Prostate gland (tissue), 2 donors: ENCODE measurements at regions of chr15 and their contacts with region 1.

Region 1: GRCh38 chr15:88476635-88477060 is 9.1 kb downstream of the MRPS11 start:
- DNase-seq: no peak
- H3K4me3 ChIP-seq: no peak overlapping the region
- H3K27ac ChIP-seq: no peak overlapping the region
- H3K4me1 ChIP-seq: no peaks in the 10 kb centered on the region
- H3K27me3 ChIP-seq: no peaks in the 10 kb centered on the region
- CTCF ChIP-seq: peak in 3 of 4 experiments; percentile 19 to 52 (median 42)
- POLR2A ChIP-seq: no peak

Region 2: GRCh38 chr15:88513195-88513594 is 36.5 kb after region 1 on chr15:
- intact Hi-C with region 1: no loop called
- DNase-seq: no peak
- H3K4me3 ChIP-seq: no peak overlapping the region
- H3K27ac ChIP-seq: no peak overlapping the region
- H3K4me1 ChIP-seq: no peaks in the 10 kb centered on the region
- H3K27me3 ChIP-seq: no peaks in the 10 kb centered on the region
- CTCF ChIP-seq: no peak
- POLR2A ChIP-seq: no peak

Region 3: DNA sequence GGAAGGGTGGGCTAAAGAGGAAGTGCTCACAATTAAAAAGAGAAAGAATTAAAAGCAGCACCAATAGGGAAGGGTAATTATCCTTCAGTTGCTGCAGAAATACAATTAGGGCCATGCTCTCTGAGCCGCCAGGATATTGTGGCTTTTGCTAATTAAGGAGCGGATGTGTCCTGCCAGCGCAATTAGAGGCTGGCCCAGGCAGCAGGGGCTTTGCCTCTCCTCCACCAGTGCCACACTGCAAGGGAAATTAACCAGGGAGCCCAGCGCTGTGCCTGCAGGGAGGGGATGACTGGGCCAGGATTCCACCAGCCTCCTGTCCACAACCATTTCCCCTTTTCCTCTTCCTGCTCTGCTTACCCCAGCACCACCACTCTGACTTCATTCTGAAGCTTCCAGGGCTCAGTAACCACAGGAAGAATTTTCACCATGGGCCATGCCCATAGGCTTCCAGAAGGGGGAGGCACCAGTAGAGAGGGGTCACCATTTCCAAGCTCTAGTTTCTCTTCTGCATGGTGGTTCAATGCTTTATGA is 134.1 kb after region 1 on chr15:
- intact Hi-C with region 1: loop called (anchors 5 kb)
- DNase-seq: no peak
- H3K4me3 ChIP-seq: no peak overlapping the region
- H3K27ac ChIP-seq: no peak overlapping the region
- H3K4me1 ChIP-seq: no peaks in the 10 kb centered on the region
- H3K27me3 ChIP-seq: peaks cover 14% of the 10 kb centered on the region
- CTCF ChIP-seq: no peak
- POLR2A ChIP-seq: no peak

Region 4: DNA sequence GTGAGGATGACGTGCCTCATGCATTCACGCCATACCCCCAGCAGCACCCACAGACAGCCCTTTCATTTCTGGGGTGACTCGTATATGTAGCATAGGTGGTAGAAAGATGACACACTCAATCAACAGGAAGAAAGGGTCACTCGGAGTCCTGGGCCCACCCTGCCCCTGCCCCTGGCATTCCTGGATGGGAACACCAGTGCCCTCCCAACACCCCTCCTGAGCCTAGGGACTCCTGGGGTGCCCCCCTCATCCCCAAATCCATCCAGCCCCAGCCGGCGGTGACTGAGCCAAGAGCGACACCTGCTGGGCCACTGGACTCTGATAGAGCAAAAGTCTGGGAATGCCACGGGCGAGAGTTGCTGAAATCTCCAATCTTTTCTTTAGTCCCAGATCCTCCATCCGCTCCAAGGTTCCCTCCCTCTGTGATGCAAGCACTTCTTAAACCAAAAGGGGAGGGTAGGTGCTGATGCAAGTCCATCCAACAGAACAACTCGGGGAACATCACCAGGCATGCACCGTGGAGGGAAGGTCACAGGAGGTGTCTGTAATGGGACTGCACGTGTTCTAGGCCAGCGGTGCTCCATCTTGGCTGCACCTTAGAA is 357.7 kb after region 1 on chr15:
- intact Hi-C with region 1: loop called (anchors 5 kb)
- DNase-seq: no peak
- H3K4me3 ChIP-seq: no peak overlapping the region
- H3K27ac ChIP-seq: no peak overlapping the region
- H3K4me1 ChIP-seq: no peaks in the 10 kb centered on the region
- H3K27me3 ChIP-seq: no peaks in the 10 kb centered on the region
- CTCF ChIP-seq: peak in 3 of 4 experiments; percentile 15 to 48 (median 46)
- POLR2A ChIP-seq: no peak

Region 5: DNA sequence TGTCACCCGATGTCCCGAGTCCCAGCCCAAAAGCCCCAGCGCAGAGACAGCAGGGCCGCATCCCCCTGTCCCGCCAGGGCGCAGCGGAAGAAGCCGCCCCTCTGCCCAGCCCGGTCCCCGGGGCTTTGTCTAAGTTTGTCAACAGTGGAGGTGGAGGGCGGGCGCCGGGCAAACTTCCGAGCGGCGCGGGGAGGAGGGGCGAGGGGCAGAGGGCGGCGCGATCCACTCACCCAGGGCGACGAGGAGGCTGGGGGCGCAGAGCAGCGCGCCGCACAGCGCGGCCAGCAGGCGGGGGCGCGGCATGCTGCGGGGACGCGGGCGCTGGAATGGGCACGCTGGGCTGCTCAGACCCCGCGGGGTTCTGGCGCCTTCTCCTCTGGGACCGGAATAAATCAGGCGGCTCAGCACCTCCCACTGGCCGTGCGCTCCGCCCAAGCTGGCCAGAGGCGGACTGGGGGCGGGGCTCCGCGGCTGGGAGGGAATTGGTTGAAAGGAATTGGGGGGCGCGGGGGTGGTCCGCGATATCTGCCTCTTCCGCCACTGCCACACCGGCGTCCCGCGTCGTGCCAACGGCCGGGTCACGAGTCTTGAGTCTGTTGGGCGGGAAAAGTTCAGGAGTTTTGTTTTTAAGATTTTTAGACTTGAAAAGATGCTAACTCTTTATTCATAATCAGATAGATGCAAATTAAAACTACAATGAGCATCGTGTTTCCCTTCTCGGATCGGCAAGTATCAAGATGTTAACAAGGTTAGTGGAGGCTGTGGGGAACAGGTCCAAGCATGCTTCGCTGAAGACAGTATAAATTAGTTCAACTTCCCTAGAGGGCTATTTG is 436.6 kb after region 1 on chr15 and contains the start of gene MFGE8:
- intact Hi-C with region 1: loop called (anchors 5 kb)
- DNase-seq: peak; percentile 48
- H3K4me3 ChIP-seq: peak within 1 kb of the TSS; percentile 60 to 66
- H3K27ac ChIP-seq: peak within 1 kb of the TSS; percentile 77 to 78
- H3K4me1 ChIP-seq: no peaks in the 10 kb centered on the region
- H3K27me3 ChIP-seq: peaks cover 2% of the 10 kb centered on the region
- CTCF ChIP-seq: peak in 1 of 4 experiments; percentile 31
- POLR2A ChIP-seq: peak; percentile 73
- total RNA-seq, gene MFGE8: 63.1 to 263 TPM